Activated naive CD4-positive, alpha-beta T cell treated with anti-CD3 and anti-CD28 coated beads, Interleukin-2, amount 10 ng/mL, durations not matched to agents 7 days and 5 days (primary cell): ENCODE measurements at regions of chr10 and their contacts with region 1.

Region 1: DNA sequence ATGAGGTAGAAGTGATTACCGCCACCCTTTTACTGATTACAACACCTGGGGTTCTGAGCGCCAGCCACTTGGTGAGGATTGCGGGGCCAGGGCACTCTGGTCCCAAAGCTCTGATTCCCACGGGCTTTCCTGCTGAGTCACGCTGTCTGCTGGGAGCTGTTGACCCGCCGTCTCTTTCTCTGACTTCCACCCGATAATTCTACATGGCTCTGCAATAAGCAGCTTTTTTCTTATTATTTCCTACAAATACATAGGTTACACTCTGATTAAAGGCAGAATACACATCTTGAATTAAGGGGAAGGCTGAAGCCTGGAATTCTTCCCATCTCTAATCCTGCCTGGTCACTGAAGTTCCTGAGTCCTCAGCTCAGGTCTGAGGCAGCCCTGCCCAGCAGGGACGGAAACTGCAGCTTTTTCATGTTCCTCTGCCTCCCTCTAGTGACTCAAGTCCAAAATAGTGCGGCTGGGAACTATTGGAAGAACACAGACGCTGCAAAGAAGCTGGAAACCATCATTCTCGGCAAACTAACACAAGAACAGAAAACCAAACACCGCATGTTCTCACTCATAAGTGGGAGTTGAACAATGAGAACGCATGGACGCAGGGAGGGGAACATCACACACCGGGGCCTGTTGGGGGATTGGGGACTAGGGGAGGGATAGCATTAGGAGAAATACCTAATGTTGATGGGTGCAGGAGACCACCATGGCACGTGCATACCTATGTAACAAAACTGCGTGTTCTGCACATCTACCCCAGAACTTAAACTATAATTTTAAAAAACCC is 178.3 kb downstream of the PRKCQ start:
- DNase-seq: peak; percentile 71
- H3K4me3 Mint-ChIP-seq: no peak overlapping the region
- H3K27ac Mint-ChIP-seq: no peak overlapping the region
- H3K4me1 Mint-ChIP-seq: peaks cover 37% of the 10 kb centered on the region
- H3K27me3 Mint-ChIP-seq: peaks cover 28% of the 10 kb centered on the region

Region 2: DNA sequence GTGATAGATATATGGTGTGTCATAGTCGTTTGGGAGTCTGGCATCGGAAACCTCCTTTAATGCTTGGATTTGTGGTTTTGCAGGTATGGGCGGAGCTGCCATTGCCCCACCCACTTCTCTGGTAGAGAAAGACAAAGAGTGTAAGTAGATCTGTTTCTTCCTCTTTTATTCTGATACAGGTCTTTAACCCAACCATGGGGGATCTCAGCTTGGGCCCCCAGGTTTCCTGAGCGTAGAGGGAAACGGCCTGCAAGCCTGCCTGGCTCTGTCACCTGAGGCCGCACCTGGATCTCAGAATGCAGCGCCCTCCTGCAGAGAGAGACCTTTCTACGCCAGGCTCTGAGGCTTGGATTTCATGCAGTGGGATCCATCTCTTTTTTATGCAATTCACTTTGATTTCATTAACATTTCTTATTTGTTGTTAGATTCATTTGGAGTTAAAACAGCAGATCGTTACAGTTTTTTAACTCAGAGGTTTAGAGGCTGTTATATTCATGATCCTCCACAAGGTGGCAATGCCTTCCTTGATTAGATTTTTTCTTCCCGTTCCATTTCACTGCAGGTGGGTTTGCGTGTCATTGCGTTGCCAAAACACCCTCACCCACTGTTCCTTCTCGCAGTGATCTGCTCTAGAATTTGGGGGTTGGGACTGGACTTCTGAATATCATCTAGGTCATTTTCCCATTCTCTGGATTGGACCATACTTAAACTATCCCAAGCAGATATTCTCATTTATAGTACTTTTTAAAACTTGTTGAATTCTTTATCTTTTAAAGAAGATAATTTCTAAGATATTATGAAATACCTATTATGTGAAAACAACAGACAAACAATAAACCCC is 292.9 kb before region 1 on chr10:
- CTCF ChIA-PET with region 1: interaction called, 54 read pairs
- DNase-seq: peak; percentile 50
- H3K4me3 Mint-ChIP-seq: no peak overlapping the region
- H3K27ac Mint-ChIP-seq: peak overlapping the region; percentile 53
- H3K4me1 Mint-ChIP-seq: peaks cover 24% of the 10 kb centered on the region
- H3K27me3 Mint-ChIP-seq: no peaks in the 10 kb centered on the region

Region 3: GRCh38 chr10:6195846-6196245 is 205.9 kb before region 1 on chr10:
- CTCF ChIA-PET with region 1: interaction called, 184 read pairs
- DNase-seq: no peak
- H3K4me3 Mint-ChIP-seq: no peak overlapping the region
- H3K27ac Mint-ChIP-seq: peak overlapping the region; percentile 26
- H3K4me1 Mint-ChIP-seq: peaks cover 29% of the 10 kb centered on the region
- H3K27me3 Mint-ChIP-seq: peaks cover 3% of the 10 kb centered on the region

Region 4: GRCh38 chr10:6208799-6209235 is 192.9 kb before region 1 on chr10:
- CTCF ChIA-PET with region 1: interaction called, 184 read pairs
- DNase-seq: no peak
- H3K4me3 Mint-ChIP-seq: no peak overlapping the region
- H3K27ac Mint-ChIP-seq: no peak overlapping the region
- H3K4me1 Mint-ChIP-seq: peaks cover 34% of the 10 kb centered on the region
- H3K27me3 Mint-ChIP-seq: no peaks in the 10 kb centered on the region

Region 5: DNA sequence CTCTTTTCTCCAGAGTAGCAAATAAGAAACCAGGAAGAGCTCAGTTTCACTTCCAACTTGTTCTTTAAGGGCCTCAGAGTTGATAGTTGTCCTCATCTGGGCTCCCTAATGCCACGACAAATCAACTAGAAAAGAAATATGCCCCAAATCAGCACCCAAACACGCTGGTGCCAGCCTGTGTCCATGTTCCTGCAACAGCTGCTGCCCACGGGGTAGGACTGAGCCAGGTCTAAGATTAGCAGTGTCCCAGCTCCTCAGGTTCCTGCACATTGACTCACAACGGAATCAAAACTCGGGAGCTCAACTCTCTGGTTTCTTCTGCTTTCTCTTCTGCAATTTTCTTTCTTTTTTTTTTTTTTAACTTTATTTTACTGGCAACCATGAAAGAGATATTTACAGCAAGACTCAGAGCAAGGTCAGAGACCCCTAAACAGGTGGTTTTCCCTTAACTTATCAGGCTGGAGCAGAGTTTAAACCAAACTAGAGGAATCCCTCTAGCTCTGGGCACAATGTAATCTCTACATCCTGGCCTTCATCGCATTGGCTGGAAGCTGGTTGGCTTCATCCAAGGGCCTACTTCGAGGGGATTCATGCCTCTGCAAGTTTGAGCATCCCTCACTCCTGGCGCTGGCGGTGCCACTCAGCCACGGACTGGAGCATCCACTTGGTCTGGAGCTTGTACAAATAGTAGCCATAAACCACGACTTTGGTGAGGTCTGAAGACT is 72.9 kb before region 1 on chr10:
- CTCF ChIA-PET with region 1: interaction called, 10 read pairs
- DNase-seq: no peak
- H3K4me3 Mint-ChIP-seq: no peak overlapping the region
- H3K27ac Mint-ChIP-seq: no peak overlapping the region
- H3K4me1 Mint-ChIP-seq: no peaks in the 10 kb centered on the region
- H3K27me3 Mint-ChIP-seq: no peaks in the 10 kb centered on the region

Region 6: DNA sequence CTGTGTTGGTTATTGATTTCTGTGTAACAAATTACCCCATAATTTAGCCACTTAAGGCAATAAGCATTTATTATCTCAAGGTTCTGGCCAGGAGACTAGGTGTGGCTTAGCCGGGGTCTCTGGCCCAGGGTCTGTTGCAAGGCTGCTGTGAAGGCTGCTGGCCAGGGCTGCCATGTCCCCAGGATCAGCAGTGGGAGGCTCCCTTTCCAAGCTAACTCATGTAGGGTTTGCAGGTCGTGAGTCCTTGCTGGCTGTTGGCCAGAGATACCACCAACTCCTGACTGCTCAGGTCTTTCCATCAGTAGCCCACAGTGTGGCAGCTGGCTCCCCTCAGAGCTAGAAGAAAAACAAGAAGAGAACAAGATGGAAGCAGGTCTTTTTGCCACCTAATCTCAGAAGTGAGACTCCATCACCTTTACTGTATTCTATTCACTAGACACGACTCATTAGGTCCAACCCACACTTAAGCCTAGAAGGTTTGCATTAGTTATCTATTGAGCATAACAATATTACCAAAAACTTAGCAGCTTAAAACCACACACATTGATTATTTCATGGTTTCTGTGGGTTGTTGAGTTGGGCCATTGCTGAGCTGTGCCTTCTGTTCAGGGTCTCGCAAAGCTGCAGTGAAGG is 13.4 kb before region 1 on chr10:
- CTCF ChIA-PET with region 1: interaction called, 10 read pairs
- DNase-seq: no peak
- H3K4me3 Mint-ChIP-seq: no peak overlapping the region
- H3K27ac Mint-ChIP-seq: no peak overlapping the region
- H3K4me1 Mint-ChIP-seq: peaks cover 6% of the 10 kb centered on the region
- H3K27me3 Mint-ChIP-seq: no peaks in the 10 kb centered on the region